Transverse colon (tissue), 4 donors: ENCODE measurements at regions of chr11 and their contacts with region 1.

Region 1: GRCh38 chr11:2420502-2421225 is 20.1 kb downstream of the TSSC4 start:
- DNase-seq: peak; percentile 73
- H3K4me3 ChIP-seq: peak overlapping the region in 2 of 4 donors; percentile 3 to 19
- H3K27ac ChIP-seq: peak overlapping the region in 1 of 4 donors; percentile 48
- H3K4me1 ChIP-seq: peaks cover 6 to 15% (median 11%) of the 10 kb centered on the region in 4 donors
- H3K27me3 ChIP-seq: peaks cover 33% of the 10 kb centered on the region
- CTCF ChIP-seq: peak; percentile 90 to 96 (median 92)
- EP300 ChIP-seq: no peak
- POLR2A ChIP-seq: no peak

Region 2: GRCh38 chr11:2196970-2197770 is 223.5 kb before region 1 on chr11:
- in situ Hi-C with region 1: loop called (anchors 5 to 25 kb)
- intact Hi-C with region 1: loop called (anchors 1 kb)
- DNase-seq: peak; percentile 83
- H3K4me3 ChIP-seq: no peak overlapping the region
- H3K27ac ChIP-seq: no peak overlapping the region
- H3K4me1 ChIP-seq: peaks cover 0 to 7% (median 5%) of the 10 kb centered on the region in 4 donors
- H3K27me3 ChIP-seq: peaks cover 10% of the 10 kb centered on the region
- CTCF ChIP-seq: peak; percentile 83 to 93 (median 90)
- EP300 ChIP-seq: no peak
- POLR2A ChIP-seq: no peak

Region 3: GRCh38 chr11:2208691-2209369 is 211.8 kb before region 1 on chr11:
- in situ Hi-C with region 1: loop called in 2 of 4 experiments (anchors 5 to 10 kb)
- intact Hi-C with region 1: no loop called
- DNase-seq: peak; percentile 9
- H3K4me3 ChIP-seq: no peak overlapping the region
- H3K27ac ChIP-seq: no peak overlapping the region
- H3K4me1 ChIP-seq: peaks cover 0 to 19% (median 12%) of the 10 kb centered on the region in 4 donors
- H3K27me3 ChIP-seq: no peaks in the 10 kb centered on the region
- CTCF ChIP-seq: peak in 1 of 5 experiments; percentile 24
- EP300 ChIP-seq: no peak
- POLR2A ChIP-seq: no peak

Region 4: DNA sequence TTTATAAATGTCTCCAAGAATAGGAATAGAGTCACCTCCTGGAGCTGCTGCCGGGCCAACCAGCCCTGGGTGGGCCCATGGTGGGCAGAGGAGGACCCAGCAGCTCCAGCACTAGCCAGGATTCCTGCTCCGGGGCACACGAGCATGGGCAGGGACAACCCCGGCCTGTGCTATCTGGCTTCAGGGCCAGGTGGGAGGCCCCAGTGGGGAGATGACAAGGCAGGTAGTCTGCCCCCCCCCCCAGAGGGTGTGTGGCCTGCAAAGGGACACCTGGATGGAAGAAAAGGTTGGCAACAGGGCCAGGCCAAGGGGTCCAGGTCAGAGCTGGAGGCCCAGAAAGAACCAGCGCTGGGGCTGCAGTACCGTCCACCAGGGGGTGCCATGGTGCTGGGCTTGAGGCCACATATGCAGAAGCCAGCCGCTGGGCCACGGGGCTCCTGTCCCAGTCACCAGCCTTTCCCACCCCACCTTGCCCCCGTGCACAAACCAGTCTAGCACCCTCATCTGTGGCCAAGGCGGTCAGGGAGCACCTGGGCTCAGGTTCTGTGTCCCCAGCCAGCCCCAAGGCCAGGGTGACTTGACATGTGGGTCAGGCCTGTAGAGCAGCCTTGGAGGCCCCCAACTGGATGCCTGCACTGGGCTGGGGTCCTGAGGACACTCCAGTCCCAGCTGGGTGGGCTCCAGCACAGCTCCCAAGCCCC is 115.4 kb before region 1 on chr11:
- in situ Hi-C with region 1: loop called in 3 of 4 experiments (anchors 10 kb)
- intact Hi-C with region 1: loop called (anchors 2 kb)
- DNase-seq: peak; percentile 88
- H3K4me3 ChIP-seq: no peak overlapping the region
- H3K27ac ChIP-seq: peak overlapping the region; percentile 84 to 94 (median 88)
- H3K4me1 ChIP-seq: peaks cover 16 to 54% (median 29%) of the 10 kb centered on the region in 4 donors
- H3K27me3 ChIP-seq: no peaks in the 10 kb centered on the region
- CTCF ChIP-seq: peak; percentile 87 to 97 (median 94)
- EP300 ChIP-seq: no peak
- POLR2A ChIP-seq: no peak

Region 5: GRCh38 chr11:2870460-2870859 is 449.8 kb after region 1 on chr11:
- in situ Hi-C with region 1: loop called in 2 of 4 experiments (anchors 10 to 25 kb)
- intact Hi-C with region 1: no loop called
- DNase-seq: no peak
- H3K4me3 ChIP-seq: no peak overlapping the region
- H3K27ac ChIP-seq: no peak overlapping the region
- H3K4me1 ChIP-seq: no peaks in the 10 kb centered on the region
- H3K27me3 ChIP-seq: peaks cover 50% of the 10 kb centered on the region
- CTCF ChIP-seq: no peak
- EP300 ChIP-seq: no peak
- POLR2A ChIP-seq: no peak